ENCODE measurements at regions of chr15 and their contacts with region 1.

Region 1: GRCh38 chr15:72206677-72207000 is 9.1 kb upstream of the GRAMD2A start:
- DNase-seq: no peak
- H3K4me3 ChIP-seq: no peak overlapping the region
- H3K27ac ChIP-seq: no peak overlapping the region
- H3K27me3 ChIP-seq: no peaks in the 10 kb centered on the region
- CTCF ChIP-seq: no peak

Region 2: GRCh38 chr15:72009222-72009621 is 197.4 kb before region 1 on chr15:
- CTCF ChIA-PET with region 1: interaction called, 10 read pairs
- POLR2A ChIA-PET with region 1: no interaction called
- DNase-seq: no peak
- H3K4me3 ChIP-seq: no peak overlapping the region
- H3K27ac ChIP-seq: no peak overlapping the region
- H3K27me3 ChIP-seq: no peaks in the 10 kb centered on the region
- CTCF ChIP-seq: no peak